Transverse colon (tissue), 4 donors: ENCODE measurements at regions of chr9 and their contacts with region 1.

Region 1: GRCh38 chr9:115591584-115591984 is 473.6 kb upstream of the TNC start:
- DNase-seq: peak; percentile 59
- H3K4me3 ChIP-seq: no peak overlapping the region
- H3K27ac ChIP-seq: peak overlapping the region; percentile 38 to 63 (median 48)
- H3K4me1 ChIP-seq: peaks cover 0 to 10% (median 1%) of the 10 kb centered on the region in 4 donors
- H3K27me3 ChIP-seq: no peaks in the 10 kb centered on the region
- CTCF ChIP-seq: peak; percentile 54 to 78 (median 73)
- EP300 ChIP-seq: no peak
- POLR2A ChIP-seq: no peak

Region 2: DNA sequence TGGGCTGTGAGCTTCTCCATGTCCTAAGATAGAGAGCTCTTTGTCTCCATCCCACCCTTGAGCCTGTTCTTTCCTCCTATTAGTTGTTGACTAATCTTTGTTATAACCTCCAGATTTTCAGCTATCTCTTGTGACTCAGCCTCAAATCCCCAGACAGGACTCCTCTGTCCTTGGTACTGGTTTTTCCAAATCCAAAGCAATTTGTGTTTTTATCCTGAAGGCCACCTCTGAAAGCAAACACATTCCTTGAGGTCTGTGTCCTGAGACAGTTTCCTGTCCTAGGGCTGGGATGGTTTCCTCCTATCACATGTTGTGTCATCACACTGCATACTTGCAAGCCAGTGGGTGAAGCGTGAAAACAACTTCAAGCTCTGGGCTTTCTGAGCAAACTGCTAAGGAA is 482.1 kb before region 1 on chr9:
- in situ Hi-C with region 1: no loop called
- intact Hi-C with region 1: no loop called
- DNase-seq: no peak
- H3K4me3 ChIP-seq: no peak overlapping the region
- H3K27ac ChIP-seq: peak overlapping the region; percentile 9 to 83 (median 53)
- H3K4me1 ChIP-seq: peaks cover 0 to 23% (median 0%) of the 10 kb centered on the region in 4 donors
- H3K27me3 ChIP-seq: no peaks in the 10 kb centered on the region
- CTCF ChIP-seq: no peak
- EP300 ChIP-seq: no peak
- POLR2A ChIP-seq: no peak

Region 3: DNA sequence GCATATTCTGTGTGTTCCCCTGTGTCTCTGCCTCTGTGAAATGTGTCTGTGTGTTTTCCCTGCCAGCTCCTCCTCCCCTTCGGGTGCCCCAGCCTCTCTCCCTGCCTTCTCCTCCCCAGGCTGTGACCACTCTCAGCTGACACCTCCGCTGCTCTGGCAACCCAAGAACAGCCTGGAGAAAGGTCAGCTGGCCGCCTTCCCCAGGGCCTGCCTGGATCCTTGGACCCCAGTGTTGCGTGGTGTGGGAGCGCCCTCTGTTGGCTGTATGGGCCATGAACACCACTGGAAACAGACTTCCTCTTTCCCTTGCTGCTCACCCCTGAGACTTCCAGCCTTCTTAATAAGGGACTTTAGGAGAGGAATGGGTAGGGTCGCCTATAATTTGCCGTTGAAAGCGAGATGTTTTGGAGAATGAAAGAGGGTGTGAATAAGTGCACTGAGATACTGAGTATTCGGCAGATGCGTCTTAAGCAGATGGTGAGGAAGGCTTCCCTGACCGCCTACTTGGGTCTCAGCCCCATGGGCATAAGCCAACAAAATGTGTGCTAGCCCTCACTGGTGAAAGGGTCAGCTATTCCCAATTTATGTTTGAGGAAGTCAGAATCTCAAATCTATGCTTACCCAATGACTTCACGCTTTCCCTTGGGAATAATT is 980.6 kb after region 1 on chr9:
- in situ Hi-C with region 1: loop called in 2 of 4 experiments (anchors 25 kb)
- intact Hi-C with region 1: no loop called
- DNase-seq: peak; percentile 86
- H3K4me3 ChIP-seq: no peak overlapping the region
- H3K27ac ChIP-seq: no peak overlapping the region
- H3K4me1 ChIP-seq: peaks cover 3 to 32% (median 17%) of the 10 kb centered on the region in 4 donors
- H3K27me3 ChIP-seq: no peaks in the 10 kb centered on the region
- CTCF ChIP-seq: peak; percentile 81 to 91 (median 86)
- EP300 ChIP-seq: no peak
- POLR2A ChIP-seq: no peak

Region 4: GRCh38 chr9:116646661-116647512 is 1055.3 kb after region 1 on chr9:
- in situ Hi-C with region 1: loop called in 3 of 4 experiments (anchors 10 to 25 kb)
- intact Hi-C with region 1: loop called (anchors 10 kb)
- DNase-seq: no peak
- H3K4me3 ChIP-seq: no peak overlapping the region
- H3K27ac ChIP-seq: no peak overlapping the region
- H3K4me1 ChIP-seq: no peaks in the 10 kb centered on the region
- H3K27me3 ChIP-seq: no peaks in the 10 kb centered on the region
- CTCF ChIP-seq: peak; percentile 32 to 50 (median 43)
- EP300 ChIP-seq: no peak
- POLR2A ChIP-seq: no peak

Region 5: GRCh38 chr9:116661037-116661954 is 1069.7 kb after region 1 on chr9:
- in situ Hi-C with region 1: loop called in 1 of 4 experiments (anchors 25 kb)
- intact Hi-C with region 1: loop called (anchors 10 kb)
- DNase-seq: no peak
- H3K4me3 ChIP-seq: no peak overlapping the region
- H3K27ac ChIP-seq: no peak overlapping the region
- H3K4me1 ChIP-seq: peaks cover 0 to 22% (median 1%) of the 10 kb centered on the region in 4 donors
- H3K27me3 ChIP-seq: no peaks in the 10 kb centered on the region
- CTCF ChIP-seq: peak; percentile 67 to 73 (median 69)
- EP300 ChIP-seq: no peak
- POLR2A ChIP-seq: no peak